Heart left ventricle (tissue), 16 donors: ENCODE measurements at regions of chr17 and their contacts with region 1.

Region 1: GRCh38 chr17:37824534-37825485 is 80.0 kb upstream of the HNF1B start:
- DNase-seq: no peak
- ATAC-seq: peak in 1 of 4 donors; percentile 24
- H3K4me3 ChIP-seq: no peak overlapping the region
- H3K27ac ChIP-seq: no peak overlapping the region
- H3K4me1 ChIP-seq: peaks cover 0 to 60% (median 8%) of the 10 kb centered on the region in 12 donors
- H3K27me3 ChIP-seq: no peaks in the 10 kb centered on the region
- CTCF ChIP-seq: no peak
- POLR2A ChIP-seq: no peak

Region 2: DNA sequence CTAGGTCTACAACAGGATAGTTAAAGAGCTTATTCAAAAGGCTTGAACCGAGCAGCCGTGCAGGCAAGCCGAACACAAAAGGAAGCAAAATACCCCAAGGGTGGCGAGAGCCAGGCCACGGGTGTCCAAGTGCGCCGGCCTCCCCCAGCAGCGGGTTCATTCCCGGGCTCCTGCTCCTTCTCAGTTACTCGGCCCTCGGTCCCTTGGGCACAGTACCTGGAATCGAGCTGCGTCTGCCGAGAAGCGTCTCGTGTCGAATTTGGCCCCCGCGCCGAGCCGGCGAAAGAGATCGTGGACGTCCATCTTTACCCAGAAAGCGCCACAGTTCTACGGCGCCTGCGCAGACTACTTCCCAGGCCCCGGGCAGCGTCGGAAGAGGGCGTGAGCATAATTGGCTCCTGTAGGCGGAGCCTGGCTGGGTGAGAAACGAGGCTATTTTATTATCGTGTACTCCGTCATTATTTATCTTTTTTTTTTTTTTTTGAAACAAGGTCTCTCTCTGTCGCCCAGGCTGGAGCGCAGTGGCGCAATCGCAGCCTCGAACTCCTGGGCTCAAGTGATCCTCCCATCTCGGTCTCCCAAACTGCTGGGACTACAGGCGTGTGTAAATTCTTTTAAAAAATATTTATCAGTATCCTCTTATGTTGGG is 181.6 kb before region 1 on chr17 and contains the start of gene DDX52:
- intact Hi-C with region 1: loop called in 1 of 10 experiments (anchors 10 kb)
- DNase-seq: peak; percentile 90 to 97 (median 94)
- ATAC-seq: peak; percentile 95 to 100 (median 99)
- H3K4me3 ChIP-seq: peak within 1 kb of the TSS; percentile 68 to 97 (median 78)
- H3K27ac ChIP-seq: peak within 1 kb of the TSS; percentile 27 to 94 (median 86)
- H3K4me1 ChIP-seq: peaks cover 0 to 39% (median 22%) of the 10 kb centered on the region in 12 donors
- H3K27me3 ChIP-seq: peaks cover 0 to 15% (median 0%) of the 10 kb centered on the region in 9 donors
- CTCF ChIP-seq: peak in 8 of 12 donors; percentile 7 to 47 (median 18)
- POLR2A ChIP-seq: peak in 1 of 2 donors; percentile 55
- total RNA-seq, gene DDX52: 8.9 to 20.9 (median 14.3) TPM

Region 3: DNA sequence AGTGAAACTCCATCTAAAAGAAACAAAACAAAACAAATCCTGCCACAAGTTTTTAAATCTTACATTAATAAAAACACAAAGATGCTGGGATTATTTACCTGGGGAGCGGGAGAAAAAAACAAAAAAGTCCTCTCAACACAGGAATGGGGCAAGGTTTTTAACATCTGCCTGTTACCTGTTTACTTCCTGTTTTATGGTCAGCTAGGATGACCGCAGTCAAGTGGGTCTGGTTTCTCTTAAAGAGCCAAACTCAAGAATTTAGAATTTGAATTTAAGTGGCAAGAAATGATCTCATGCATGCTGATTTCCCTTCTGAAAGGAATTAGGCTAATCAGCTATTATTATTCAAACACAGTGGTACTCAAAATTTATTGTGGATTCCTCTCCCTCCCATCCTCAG is 59.7 kb after region 1 on chr17:
- intact Hi-C with region 1: no loop called
- DNase-seq: no peak
- ATAC-seq: no peak
- H3K4me3 ChIP-seq: no peak overlapping the region
- H3K27ac ChIP-seq: no peak overlapping the region
- H3K4me1 ChIP-seq: no peaks in the 10 kb centered on the region
- H3K27me3 ChIP-seq: peaks cover 0 to 1% (median 0%) of the 10 kb centered on the region in 9 donors
- CTCF ChIP-seq: no peak
- POLR2A ChIP-seq: no peak